ENCODE measurements at regions of chr15 and their contacts with region 1.

Region 1: GRCh38 chr15:38683382-38684242 is 119.0 kb upstream of the RASGRP1 start:
- DNase-seq: peak in 1 of 2 donors; percentile 19
- ATAC-seq: no peak
- H3K4me3 ChIP-seq: no peak overlapping the region
- H3K27ac ChIP-seq: no peak overlapping the region
- H3K4me1 ChIP-seq: no peaks in the 10 kb centered on the region
- H3K27me3 ChIP-seq: no peaks in the 10 kb centered on the region
- CTCF ChIP-seq: peak in 4 of 5 experiments; percentile 33 to 54 (median 46)
- POLR2A ChIP-seq: no peak

Region 2: DNA sequence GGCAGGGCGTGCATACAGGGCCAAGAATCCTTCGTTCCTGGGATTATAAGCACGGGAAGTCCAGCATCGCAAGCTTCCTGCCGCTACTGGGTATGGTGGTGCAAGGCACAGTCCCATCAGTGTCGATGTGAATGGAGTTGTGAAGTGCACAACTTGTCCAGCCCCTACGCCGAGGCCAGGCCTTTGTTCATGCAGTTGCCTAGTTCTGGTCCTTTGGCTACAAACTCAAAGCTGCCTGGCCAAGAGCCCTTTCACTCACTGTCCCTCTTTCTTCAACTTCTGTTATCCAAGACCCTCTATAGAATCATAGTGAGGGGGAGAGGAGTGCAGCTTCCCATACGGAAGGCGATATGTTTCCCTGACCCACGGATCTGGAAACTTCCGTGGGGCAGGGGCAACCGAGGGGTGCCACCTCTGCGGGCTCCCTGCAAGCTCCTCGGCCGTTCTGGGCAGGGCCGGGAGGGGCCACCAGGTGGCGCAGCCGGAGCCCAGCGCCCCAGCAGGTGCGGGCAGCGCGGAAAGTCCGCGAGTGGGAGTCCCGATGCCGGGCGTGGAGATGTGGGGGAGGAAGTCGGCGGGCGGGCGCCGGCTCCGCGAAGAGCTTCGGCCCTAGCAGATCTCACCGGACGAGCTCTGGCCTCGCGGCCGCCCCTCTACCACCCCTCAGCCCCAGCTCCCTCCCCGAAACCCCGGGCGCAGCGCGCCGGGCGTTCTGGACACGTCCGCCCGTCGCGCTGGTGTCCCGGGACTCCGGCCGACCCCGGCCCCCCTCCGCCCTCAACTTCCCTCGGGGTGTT is 119.7 kb before region 1 on chr15:
- in situ Hi-C with region 1: loop called in 1 of 4 experiments (anchors 10 kb)
- intact Hi-C with region 1: loop called (anchors 10 kb)
- DNase-seq: peak; percentile 16 to 20
- ATAC-seq: peak; percentile 39 to 62
- H3K4me3 ChIP-seq: peak overlapping the region; percentile 51 to 55 (median 54)
- H3K27ac ChIP-seq: no peak overlapping the region
- H3K4me1 ChIP-seq: peaks cover 0 to 2% of the 10 kb centered on the region in 2 donors
- H3K27me3 ChIP-seq: peaks cover 0 to 15% (median 3%) of the 10 kb centered on the region in 3 donors
- CTCF ChIP-seq: peak; percentile 35 to 76 (median 68)
- POLR2A ChIP-seq: no peak